Mammary epithelial cell (primary cell): ENCODE measurements at regions of chr16 and their contacts with region 1.

Region 1: DNA sequence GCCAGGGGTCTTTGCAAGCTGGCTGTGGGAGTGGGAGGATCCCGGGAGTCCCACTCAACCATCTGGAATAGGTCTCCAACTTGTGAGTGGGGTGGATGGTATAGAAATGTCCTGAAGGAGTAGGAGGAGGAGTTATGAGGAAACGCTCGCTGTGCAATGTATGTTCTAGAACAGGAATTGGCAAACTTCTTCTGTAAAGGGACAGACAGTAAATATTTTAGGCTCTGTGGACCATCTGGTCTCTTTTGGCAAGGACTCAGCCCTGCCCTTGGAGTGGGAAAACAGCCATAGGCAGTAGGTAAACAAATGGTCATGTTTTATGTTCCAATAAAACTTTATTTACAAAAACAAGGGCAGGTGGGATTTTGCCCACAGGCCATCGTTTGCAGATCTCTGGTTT is 149.2 kb downstream of the NPIPB5 start:
- DNase-seq: no peak
- H3K4me3 ChIP-seq: no peak overlapping the region
- H3K27ac ChIP-seq: no peak overlapping the region
- H3K4me1 ChIP-seq: peaks cover 10% of the 10 kb centered on the region
- H3K27me3 ChIP-seq: no peaks in the 10 kb centered on the region
- CTCF ChIP-seq: no peak

Region 2: GRCh38 chr16:21263640-21264570 is 1396.0 kb before region 1 on chr16:
- CTCF ChIA-PET with region 1: no interaction called
- dilution Hi-C with region 1: loop called (anchors 10 kb)
- in situ Hi-C with region 1: no loop called
- intact Hi-C with region 1: no loop called
- DNase-seq: no peak
- H3K4me3 ChIP-seq: no peak overlapping the region
- H3K27ac ChIP-seq: no peak overlapping the region
- H3K4me1 ChIP-seq: no peaks in the 10 kb centered on the region
- H3K27me3 ChIP-seq: no peaks in the 10 kb centered on the region
- CTCF ChIP-seq: no peak

Region 3: DNA sequence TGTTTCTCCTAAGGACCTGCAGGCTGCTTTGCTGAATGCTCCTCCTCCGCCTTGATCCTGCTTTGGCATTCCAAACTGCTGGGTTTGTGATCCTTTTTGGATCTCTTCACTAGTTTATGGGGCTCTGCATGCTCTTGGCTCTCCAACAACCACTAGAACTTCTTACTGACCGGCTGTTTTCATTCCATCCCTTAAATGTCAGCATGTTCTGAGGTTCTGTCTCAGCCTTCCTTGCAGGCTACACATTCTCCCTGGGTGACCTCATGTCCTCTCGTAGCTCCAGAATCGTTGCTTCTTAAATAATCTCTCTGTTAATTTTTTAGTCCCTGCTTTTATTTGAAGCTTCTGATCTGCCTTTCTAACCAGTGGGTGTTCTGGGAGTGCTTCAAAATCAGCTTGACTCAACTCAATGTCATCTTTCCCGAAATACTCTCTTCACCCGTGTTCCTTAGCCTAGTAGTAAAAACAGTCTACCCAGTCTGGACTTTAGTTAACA is 35.0 kb after region 1 on chr16:
- CTCF ChIA-PET with region 1: no interaction called
- dilution Hi-C with region 1: loop called (anchors 5 kb)
- in situ Hi-C with region 1: no loop called
- intact Hi-C with region 1: no loop called
- DNase-seq: peak; percentile 51
- H3K4me3 ChIP-seq: no peak overlapping the region
- H3K27ac ChIP-seq: no peak overlapping the region
- H3K4me1 ChIP-seq: peaks cover 5% of the 10 kb centered on the region
- H3K27me3 ChIP-seq: no peaks in the 10 kb centered on the region
- CTCF ChIP-seq: no peak